MCF 10A (cell line): ENCODE measurements at regions of chr1 and their contacts with region 1.

Region 1: GRCh38 chr1:22976461-22977243 is 4.0 kb upstream of the LACTBL1 start:
- DNase-seq: peak; percentile 88
- H3K4me3 Mint-ChIP-seq: no peak overlapping the region
- H3K27ac Mint-ChIP-seq: no peak overlapping the region
- H3K4me1 Mint-ChIP-seq: peaks cover 30% of the 10 kb centered on the region
- H3K27me3 Mint-ChIP-seq: no peaks in the 10 kb centered on the region
- CTCF ChIP-seq: peak; percentile 92

Region 2: GRCh38 chr1:22289307-22289995 is 687.2 kb before region 1 on chr1:
- CTCF ChIA-PET with region 1: no interaction called
- POLR2A ChIA-PET with region 1: no interaction called
- intact Hi-C with region 1: no loop called
- DNase-seq: no peak
- H3K4me3 Mint-ChIP-seq: no peak overlapping the region
- H3K27ac Mint-ChIP-seq: no peak overlapping the region
- H3K4me1 Mint-ChIP-seq: no peaks in the 10 kb centered on the region
- H3K27me3 Mint-ChIP-seq: peaks cover 29% of the 10 kb centered on the region
- CTCF ChIP-seq: no peak

Region 3: DNA sequence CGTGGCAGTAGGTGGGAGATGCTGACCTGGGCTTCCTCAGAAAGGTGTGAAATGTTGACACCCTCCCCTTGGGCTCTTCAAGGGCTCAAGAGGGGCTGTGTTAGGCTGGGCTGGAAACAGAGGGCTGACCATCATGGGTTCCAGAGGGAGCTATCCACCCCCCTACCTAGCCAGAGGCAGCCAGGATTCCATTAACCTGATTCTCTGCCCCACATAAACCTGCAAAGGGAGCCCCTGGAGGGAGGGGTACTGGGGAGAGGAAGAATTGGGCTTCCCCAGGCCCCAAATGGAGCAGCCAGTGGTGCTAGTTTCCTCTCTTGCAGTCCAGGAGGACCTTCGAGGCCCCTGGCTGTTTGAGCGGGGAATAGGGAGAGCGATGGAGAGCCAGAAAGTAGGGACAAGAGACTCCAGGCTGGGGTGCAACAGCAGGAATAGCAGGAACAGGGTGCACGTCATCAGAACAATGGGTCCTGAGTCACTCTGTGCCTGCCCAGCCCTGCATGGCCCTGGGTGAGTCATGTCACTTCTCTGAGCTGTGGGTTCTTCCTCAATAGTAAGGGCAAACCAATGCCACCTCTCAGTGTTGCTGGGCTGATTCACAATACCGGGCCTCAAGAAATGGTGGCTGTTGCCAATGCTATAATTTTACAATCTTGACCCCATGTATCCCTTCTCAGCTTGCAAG is 144.8 kb before region 1 on chr1:
- CTCF ChIA-PET with region 1: no interaction called
- POLR2A ChIA-PET with region 1: no interaction called
- intact Hi-C with region 1: no loop called
- DNase-seq: peak; percentile 95
- H3K4me3 Mint-ChIP-seq: no peak overlapping the region
- H3K27ac Mint-ChIP-seq: peak overlapping the region; percentile 62
- H3K4me1 Mint-ChIP-seq: peaks cover 28% of the 10 kb centered on the region
- H3K27me3 Mint-ChIP-seq: no peaks in the 10 kb centered on the region
- CTCF ChIP-seq: no peak

Region 4: DNA sequence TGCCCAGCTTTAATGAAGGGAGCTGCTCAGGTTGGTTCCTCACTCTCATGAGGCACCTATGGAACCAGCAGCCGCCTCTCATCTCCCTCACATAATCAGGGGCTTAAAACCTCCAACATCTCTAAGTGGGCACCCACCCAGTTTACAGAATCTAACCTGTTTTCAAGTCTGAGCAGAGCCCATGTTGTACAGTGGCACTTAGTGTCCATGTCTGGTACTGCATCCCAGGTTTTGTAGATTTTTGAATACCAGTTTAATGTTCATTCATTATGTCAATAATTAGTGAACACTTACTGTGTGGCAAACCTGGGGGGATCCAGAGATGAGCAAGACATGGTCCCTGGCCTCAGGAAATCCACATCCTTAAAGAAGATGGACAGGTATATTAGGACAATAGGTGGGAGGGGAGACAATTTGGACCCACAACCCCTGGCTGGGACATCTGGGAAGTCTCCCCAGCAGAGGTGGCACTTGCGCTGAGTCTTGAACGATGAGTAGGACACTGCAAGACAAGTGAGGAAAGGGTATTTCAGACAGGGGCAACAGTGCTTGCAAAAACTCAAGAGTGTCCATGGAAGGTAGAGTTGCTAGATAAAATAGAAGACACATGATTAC is 87.3 kb before region 1 on chr1:
- CTCF ChIA-PET with region 1: no interaction called
- POLR2A ChIA-PET with region 1: no interaction called
- intact Hi-C with region 1: no loop called
- DNase-seq: peak; percentile 58
- H3K4me3 Mint-ChIP-seq: no peak overlapping the region
- H3K27ac Mint-ChIP-seq: no peak overlapping the region
- H3K4me1 Mint-ChIP-seq: no peaks in the 10 kb centered on the region
- H3K27me3 Mint-ChIP-seq: no peaks in the 10 kb centered on the region
- CTCF ChIP-seq: peak; percentile 84

Region 5: DNA sequence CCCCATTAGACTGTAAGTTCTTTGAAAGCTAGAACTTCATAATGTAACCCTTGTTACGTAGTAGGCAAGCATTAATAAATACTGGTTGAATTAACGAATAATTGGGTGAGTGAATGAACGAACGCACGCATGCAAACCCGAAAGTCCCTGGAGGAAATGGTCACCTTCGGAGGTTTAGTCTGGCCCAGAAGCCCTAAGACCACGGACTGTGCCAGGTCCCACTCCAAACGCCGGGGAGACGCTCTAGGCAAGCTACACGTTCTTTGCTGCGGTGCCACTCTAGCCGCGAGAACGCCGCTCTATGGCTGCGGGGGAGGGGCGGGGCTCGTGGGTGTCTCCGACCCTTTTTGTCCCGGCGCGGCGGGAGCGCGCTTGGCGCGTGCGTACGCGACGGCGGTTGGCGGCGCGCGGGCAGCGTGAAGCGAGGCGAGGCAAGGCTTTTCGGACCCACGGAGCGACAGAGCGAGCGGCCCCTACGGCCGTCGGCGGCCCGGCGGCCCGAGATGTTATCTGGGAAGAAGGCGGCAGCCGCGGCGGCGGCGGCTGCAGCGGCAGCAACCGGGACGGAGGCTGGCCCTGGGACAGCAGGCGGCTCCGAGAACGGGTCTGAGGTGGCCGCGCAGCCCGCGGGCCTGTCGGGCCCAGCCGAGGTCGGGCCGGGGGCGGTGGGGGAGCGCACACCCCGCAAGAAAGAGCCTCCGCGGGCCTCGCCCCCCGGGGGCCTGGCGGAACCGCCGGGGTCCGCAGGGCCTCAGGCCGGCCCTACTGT is 42.6 kb after region 1 on chr1 and contains the start of gene KDM1A:
- CTCF ChIA-PET with region 1: interaction called, 3 read pairs
- POLR2A ChIA-PET with region 1: interaction called, 3 read pairs
- intact Hi-C with region 1: loop called (anchors 2 kb)
- DNase-seq: peak; percentile 98
- H3K4me3 Mint-ChIP-seq: peak within 1 kb of the TSS; percentile 74
- H3K27ac Mint-ChIP-seq: peak within 1 kb of the TSS; percentile 47
- H3K4me1 Mint-ChIP-seq: peaks cover 15% of the 10 kb centered on the region
- H3K27me3 Mint-ChIP-seq: no peaks in the 10 kb centered on the region
- CTCF ChIP-seq: no peak
- total RNA-seq, gene KDM1A: 64.2 and 72.3 TPM in 2 replicates

Region 6: DNA sequence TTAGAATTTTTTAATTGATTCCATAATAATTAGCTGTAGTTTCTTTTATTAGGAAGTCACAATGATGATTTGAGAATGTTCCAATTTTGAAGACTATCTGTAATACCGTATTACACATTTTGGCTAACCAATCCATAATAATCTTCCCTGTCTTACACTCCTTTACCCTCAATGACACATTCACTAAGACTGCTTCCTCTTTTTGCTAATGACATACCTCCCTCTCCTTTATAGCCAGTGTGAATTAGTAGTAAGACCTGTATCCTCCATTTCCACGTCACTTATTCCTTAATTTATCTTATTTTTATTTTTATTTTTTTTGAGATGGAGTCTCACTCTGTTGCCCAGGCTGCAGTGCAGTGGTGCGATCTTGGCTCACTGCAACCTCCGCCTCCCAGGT is 52.7 kb after region 1 on chr1:
- CTCF ChIA-PET with region 1: no interaction called
- POLR2A ChIA-PET with region 1: no interaction called
- intact Hi-C with region 1: no loop called
- DNase-seq: no peak
- H3K4me3 Mint-ChIP-seq: no peak overlapping the region
- H3K27ac Mint-ChIP-seq: no peak overlapping the region
- H3K4me1 Mint-ChIP-seq: peaks cover 27% of the 10 kb centered on the region
- H3K27me3 Mint-ChIP-seq: no peaks in the 10 kb centered on the region
- CTCF ChIP-seq: no peak

Region 7: DNA sequence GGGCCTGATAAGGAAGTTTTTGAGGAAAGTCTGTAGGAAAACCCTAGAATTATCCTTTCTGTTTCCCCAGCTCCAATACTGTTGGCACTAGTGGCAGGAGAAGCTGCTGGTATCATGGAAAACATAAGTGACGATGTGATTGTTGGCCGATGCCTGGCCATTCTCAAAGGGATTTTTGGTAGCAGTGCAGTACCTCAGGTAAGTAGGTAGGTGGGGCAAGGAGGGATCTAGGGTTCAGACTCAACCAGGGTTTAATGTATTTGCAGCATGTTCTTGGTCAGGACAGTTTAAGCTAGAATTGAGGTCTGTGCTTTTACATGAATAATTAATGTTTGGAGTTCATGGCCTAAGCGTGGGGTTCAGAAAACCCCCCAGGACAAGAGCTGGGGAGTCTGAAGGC is 104.7 kb after region 1 on chr1:
- CTCF ChIA-PET with region 1: interaction called, 3 read pairs
- POLR2A ChIA-PET with region 1: no interaction called
- intact Hi-C with region 1: loop called (anchors 5 kb)
- DNase-seq: no peak
- H3K4me3 Mint-ChIP-seq: no peak overlapping the region
- H3K27ac Mint-ChIP-seq: no peak overlapping the region
- H3K4me1 Mint-ChIP-seq: peaks cover 19% of the 10 kb centered on the region
- H3K27me3 Mint-ChIP-seq: no peaks in the 10 kb centered on the region
- CTCF ChIP-seq: no peak

Region 8: DNA sequence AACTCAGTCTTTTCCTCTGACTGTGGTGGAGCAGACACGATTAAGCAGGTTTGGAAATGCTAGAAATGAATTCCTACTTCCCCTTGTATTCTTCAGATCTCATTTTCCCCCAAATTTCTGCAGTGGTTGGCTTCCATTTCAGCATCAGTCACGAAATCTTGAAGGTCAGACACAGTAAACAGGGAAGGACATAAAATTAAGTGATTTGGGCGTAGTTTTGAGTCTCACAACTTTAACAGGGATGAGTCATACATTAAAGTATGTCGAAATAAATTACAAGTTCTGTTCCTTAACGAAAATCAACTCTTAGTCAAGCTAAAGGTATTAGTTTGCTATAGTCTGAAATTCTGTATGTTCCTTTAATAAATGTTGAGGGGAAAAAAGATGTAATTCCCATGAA is 306.3 kb after region 1 on chr1:
- CTCF ChIA-PET with region 1: no interaction called
- POLR2A ChIA-PET with region 1: no interaction called
- intact Hi-C with region 1: loop called (anchors 5 kb)
- DNase-seq: peak; percentile 69
- H3K4me3 Mint-ChIP-seq: peak overlapping the region; percentile 26
- H3K27ac Mint-ChIP-seq: peak overlapping the region; percentile 80
- H3K4me1 Mint-ChIP-seq: peaks cover 32% of the 10 kb centered on the region
- H3K27me3 Mint-ChIP-seq: no peaks in the 10 kb centered on the region
- CTCF ChIP-seq: no peak

Region 9: GRCh38 chr1:23539698-23540266 is 563.1 kb after region 1 on chr1:
- CTCF ChIA-PET with region 1: no interaction called
- POLR2A ChIA-PET with region 1: no interaction called
- intact Hi-C with region 1: loop called (anchors 1 kb)
- DNase-seq: peak; percentile 90
- H3K4me3 Mint-ChIP-seq: no peak overlapping the region
- H3K27ac Mint-ChIP-seq: no peak overlapping the region
- H3K4me1 Mint-ChIP-seq: peaks cover 18% of the 10 kb centered on the region
- H3K27me3 Mint-ChIP-seq: no peaks in the 10 kb centered on the region
- CTCF ChIP-seq: peak; percentile 91